ENCODE measurements at regions of chr1 and their contacts with region 1.

Region 1: DNA sequence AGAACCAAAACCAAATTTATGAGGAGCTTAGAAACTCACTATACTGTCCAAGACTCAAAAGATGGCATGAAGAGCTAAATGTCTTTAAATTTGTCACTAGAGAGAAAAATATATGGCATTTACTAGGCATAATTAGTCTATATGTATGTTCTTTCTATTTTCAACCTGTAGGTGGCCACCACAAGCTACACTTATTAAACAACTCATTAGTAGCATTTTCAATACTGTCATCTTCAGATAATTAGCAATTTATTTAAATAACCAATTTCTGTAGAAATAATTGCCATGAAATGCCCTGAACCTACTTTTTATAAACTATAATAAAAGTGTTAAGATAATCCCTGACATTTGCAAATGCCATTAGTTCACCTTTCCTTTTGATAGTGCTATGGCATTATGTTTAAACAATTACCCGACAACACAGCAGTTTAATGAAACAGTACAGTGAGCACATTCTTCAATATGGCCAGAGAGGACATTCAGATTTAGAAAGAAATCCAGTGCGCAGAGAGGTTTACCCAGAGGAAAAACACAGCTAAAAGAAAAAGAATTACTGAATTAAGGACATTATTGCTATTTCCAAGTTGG is 522.5 kb downstream of the PTBP2 start:
- DNase-seq: no peak
- ATAC-seq: peak; percentile 81
- H3K4me3 ChIP-seq: no peak overlapping the region
- H3K27ac ChIP-seq: no peak overlapping the region
- H3K4me1 ChIP-seq: no peaks in the 10 kb centered on the region
- H3K27me3 ChIP-seq: no peaks in the 10 kb centered on the region
- CTCF ChIP-seq: peak in 2 of 3 experiments; percentile 32 to 41; a peak in 2 of 6 replicates
- EP300 ChIP-seq: no peak
- POLR2A ChIP-seq: no peak
- RAD21 ChIP-seq: peak; percentile 60

Region 2: GRCh38 chr1:96966536-96967138 is 277.4 kb before region 1 on chr1:
- CTCF ChIA-PET with region 1: interaction called, 3 read pairs
- POLR2A ChIA-PET with region 1: no interaction called
- RAD21 ChIA-PET with region 1: interaction called, 5 read pairs
- SMC1A ChIA-PET with region 1: no interaction called
- in situ Hi-C with region 1: no loop called
- intact Hi-C with region 1: loop called (anchors 10 kb)
- DNase-seq: peak; percentile 28
- ATAC-seq: peak; percentile 95
- H3K4me3 ChIP-seq: no peak overlapping the region
- H3K27ac ChIP-seq: no peak overlapping the region
- H3K4me1 ChIP-seq: no peaks in the 10 kb centered on the region
- H3K27me3 ChIP-seq: no peaks in the 10 kb centered on the region
- CTCF ChIP-seq: peak; percentile 89 to 90 (median 89)
- EP300 ChIP-seq: no peak
- POLR2A ChIP-seq: no peak
- RAD21 ChIP-seq: peak; percentile 94

Region 3: DNA sequence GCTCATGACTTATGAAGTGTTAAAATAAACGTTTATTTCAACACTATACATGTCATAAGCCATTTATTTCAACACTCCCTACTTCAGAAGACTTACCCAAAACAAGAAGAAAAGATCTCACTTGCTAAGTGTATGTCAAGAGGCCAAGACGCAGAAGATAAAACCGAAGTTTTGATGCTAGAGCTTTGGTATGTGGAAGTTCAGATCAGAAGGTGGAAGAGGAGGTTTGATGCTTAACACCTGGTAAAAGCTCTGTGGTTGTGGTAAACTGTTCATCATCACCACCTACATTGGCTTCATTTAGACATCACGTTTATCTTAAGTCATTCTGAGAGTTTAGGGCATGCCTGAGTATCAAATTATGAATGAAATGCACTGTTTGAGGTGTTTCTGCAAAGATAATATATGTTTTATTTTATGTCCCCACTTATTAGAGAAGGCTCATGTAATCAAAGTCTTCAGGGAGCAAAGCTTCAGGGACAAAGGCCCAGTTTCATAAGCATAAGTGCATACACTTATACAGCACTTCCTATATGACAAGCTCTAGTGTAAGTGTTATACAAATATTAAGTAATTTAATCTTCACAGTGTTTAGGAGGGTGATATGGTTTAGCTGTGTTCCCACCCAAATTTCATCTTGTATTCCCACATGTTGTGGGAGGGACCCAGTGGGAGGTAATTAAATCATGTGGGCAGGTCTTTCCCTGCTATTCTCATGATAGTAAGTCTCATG is 10.8 kb after region 1 on chr1:
- CTCF ChIA-PET with region 1: interaction called, 10 read pairs
- POLR2A ChIA-PET with region 1: no interaction called
- RAD21 ChIA-PET with region 1: interaction called, 3 read pairs
- SMC1A ChIA-PET with region 1: interaction called, 25 read pairs
- in situ Hi-C with region 1: no loop called
- intact Hi-C with region 1: no loop called
- DNase-seq: no peak
- ATAC-seq: peak; percentile 87
- H3K4me3 ChIP-seq: no peak overlapping the region
- H3K27ac ChIP-seq: no peak overlapping the region
- H3K4me1 ChIP-seq: no peaks in the 10 kb centered on the region
- H3K27me3 ChIP-seq: no peaks in the 10 kb centered on the region
- CTCF ChIP-seq: no peak
- EP300 ChIP-seq: no peak
- POLR2A ChIP-seq: no peak
- RAD21 ChIP-seq: no peak

Region 4: DNA sequence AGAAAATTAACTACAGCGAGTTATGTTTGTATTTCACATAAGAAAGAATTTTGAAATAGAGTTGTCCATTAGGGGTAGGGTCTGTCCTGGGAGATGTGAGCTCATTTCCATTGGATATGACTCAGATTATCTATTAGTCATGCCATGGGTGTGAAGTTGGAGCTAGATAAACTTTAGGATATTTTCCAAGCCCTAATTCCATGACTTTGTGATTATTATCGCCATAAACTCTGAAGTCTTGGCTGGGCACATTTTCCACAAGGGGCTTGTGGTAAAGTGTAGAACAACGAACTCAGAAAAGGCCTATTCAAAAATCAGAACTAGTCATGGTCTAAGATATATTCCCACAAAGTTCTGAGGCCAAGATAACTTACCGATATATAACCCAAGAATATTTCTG is 280.1 kb after region 1 on chr1:
- CTCF ChIA-PET with region 1: interaction called, 46 read pairs
- POLR2A ChIA-PET with region 1: no interaction called
- RAD21 ChIA-PET with region 1: interaction called, 45 read pairs
- SMC1A ChIA-PET with region 1: interaction called, 34 read pairs
- in situ Hi-C with region 1: no loop called
- intact Hi-C with region 1: loop called (anchors 2 kb)
- DNase-seq: no peak
- ATAC-seq: no peak
- H3K4me3 ChIP-seq: no peak overlapping the region
- H3K27ac ChIP-seq: no peak overlapping the region
- H3K4me1 ChIP-seq: no peaks in the 10 kb centered on the region
- H3K27me3 ChIP-seq: no peaks in the 10 kb centered on the region
- CTCF ChIP-seq: no peak
- EP300 ChIP-seq: no peak
- POLR2A ChIP-seq: no peak
- RAD21 ChIP-seq: no peak

Region 5: GRCh38 chr1:97827887-97828286 is 583.8 kb after region 1 on chr1:
- CTCF ChIA-PET with region 1: interaction called, 4 read pairs
- POLR2A ChIA-PET with region 1: no interaction called
- RAD21 ChIA-PET with region 1: no interaction called
- SMC1A ChIA-PET with region 1: interaction called, 3 read pairs
- in situ Hi-C with region 1: no loop called
- intact Hi-C with region 1: loop called (anchors 2 kb)
- DNase-seq: no peak
- ATAC-seq: peak; percentile 92
- H3K4me3 ChIP-seq: no peak overlapping the region
- H3K27ac ChIP-seq: no peak overlapping the region
- H3K4me1 ChIP-seq: no peaks in the 10 kb centered on the region
- H3K27me3 ChIP-seq: no peaks in the 10 kb centered on the region
- CTCF ChIP-seq: no peak
- EP300 ChIP-seq: no peak
- POLR2A ChIP-seq: no peak
- RAD21 ChIP-seq: no peak

Region 6: GRCh38 chr1:98053471-98054366 is 809.7 kb after region 1 on chr1:
- CTCF ChIA-PET with region 1: interaction called, 24 read pairs
- POLR2A ChIA-PET with region 1: no interaction called
- RAD21 ChIA-PET with region 1: interaction called, 4 read pairs
- SMC1A ChIA-PET with region 1: interaction called, 20 read pairs
- in situ Hi-C with region 1: no loop called
- intact Hi-C with region 1: loop called (anchors 1 kb)
- DNase-seq: no peak
- ATAC-seq: peak; percentile 99
- H3K4me3 ChIP-seq: peak overlapping the region; percentile 24; the same call in 1 of the 2 replicates
- H3K27ac ChIP-seq: no peak overlapping the region
- H3K4me1 ChIP-seq: no peaks in the 10 kb centered on the region
- H3K27me3 ChIP-seq: peaks cover 1 to 11% of the 10 kb centered on the region in 2 experiments; a peak in 2 of 4 replicates
- CTCF ChIP-seq: peak; percentile 66 to 86 (median 71); a peak in 5 of 6 replicates
- EP300 ChIP-seq: no peak
- POLR2A ChIP-seq: no peak
- RAD21 ChIP-seq: peak; percentile 85